ENCODE measurements at regions of chr11 and their contacts with region 1.

Region 1: GRCh38 chr11:60725592-60725991 is 1.1 kb downstream of the MS4A18 start:
- DNase-seq: no peak
- H3K4me3 ChIP-seq: no peak overlapping the region
- H3K27ac ChIP-seq: no peak overlapping the region
- H3K4me1 ChIP-seq: no peaks in the 10 kb centered on the region
- CTCF ChIP-seq: no peak

Region 2: GRCh38 chr11:60310407-60311279 is 414.9 kb before region 1 on chr11:
- CTCF ChIA-PET with region 1: no interaction called
- POLR2A ChIA-PET with region 1: no interaction called
- intact Hi-C with region 1: loop called (anchors 10 kb)
- DNase-seq: peak; percentile 33
- H3K4me3 ChIP-seq: no peak overlapping the region
- H3K27ac ChIP-seq: no peak overlapping the region
- H3K4me1 ChIP-seq: peaks cover 5% of the 10 kb centered on the region
- CTCF ChIP-seq: no peak

Region 3: DNA sequence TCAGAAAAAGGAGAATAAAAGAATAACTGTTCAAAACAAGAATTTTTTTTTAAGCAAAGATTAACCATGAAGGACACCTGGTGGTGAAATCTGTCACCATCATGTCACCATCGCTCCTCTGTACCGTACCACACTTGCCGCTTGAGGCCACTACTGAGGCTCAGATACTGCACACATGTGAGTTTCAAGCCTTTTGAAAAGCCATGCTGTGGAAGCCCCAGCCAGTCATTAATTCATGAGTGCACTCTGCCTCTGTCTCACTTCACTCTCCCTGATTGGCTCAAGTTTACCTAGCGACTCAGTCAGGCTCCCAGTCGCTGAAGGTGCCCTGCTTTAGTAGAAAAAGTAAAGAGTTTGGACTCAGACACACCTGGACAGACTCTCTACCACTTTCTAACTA is 239.6 kb before region 1 on chr11:
- CTCF ChIA-PET with region 1: no interaction called
- POLR2A ChIA-PET with region 1: no interaction called
- intact Hi-C with region 1: no loop called
- DNase-seq: peak; percentile 95
- H3K4me3 ChIP-seq: no peak overlapping the region
- H3K27ac ChIP-seq: peak overlapping the region; percentile 9
- H3K4me1 ChIP-seq: peaks cover 52% of the 10 kb centered on the region
- CTCF ChIP-seq: peak; percentile 100

Region 4: GRCh38 chr11:60810569-60810968 is 85.0 kb after region 1 on chr11:
- CTCF ChIA-PET with region 1: no interaction called
- POLR2A ChIA-PET with region 1: no interaction called
- intact Hi-C with region 1: no loop called
- DNase-seq: no peak
- H3K4me3 ChIP-seq: no peak overlapping the region
- H3K27ac ChIP-seq: no peak overlapping the region
- H3K4me1 ChIP-seq: no peaks in the 10 kb centered on the region
- CTCF ChIP-seq: no peak

Measured in OCI-LY7 (cell line).